ENCODE measurements at regions of chr17 and their contacts with region 1.

Region 1: DNA sequence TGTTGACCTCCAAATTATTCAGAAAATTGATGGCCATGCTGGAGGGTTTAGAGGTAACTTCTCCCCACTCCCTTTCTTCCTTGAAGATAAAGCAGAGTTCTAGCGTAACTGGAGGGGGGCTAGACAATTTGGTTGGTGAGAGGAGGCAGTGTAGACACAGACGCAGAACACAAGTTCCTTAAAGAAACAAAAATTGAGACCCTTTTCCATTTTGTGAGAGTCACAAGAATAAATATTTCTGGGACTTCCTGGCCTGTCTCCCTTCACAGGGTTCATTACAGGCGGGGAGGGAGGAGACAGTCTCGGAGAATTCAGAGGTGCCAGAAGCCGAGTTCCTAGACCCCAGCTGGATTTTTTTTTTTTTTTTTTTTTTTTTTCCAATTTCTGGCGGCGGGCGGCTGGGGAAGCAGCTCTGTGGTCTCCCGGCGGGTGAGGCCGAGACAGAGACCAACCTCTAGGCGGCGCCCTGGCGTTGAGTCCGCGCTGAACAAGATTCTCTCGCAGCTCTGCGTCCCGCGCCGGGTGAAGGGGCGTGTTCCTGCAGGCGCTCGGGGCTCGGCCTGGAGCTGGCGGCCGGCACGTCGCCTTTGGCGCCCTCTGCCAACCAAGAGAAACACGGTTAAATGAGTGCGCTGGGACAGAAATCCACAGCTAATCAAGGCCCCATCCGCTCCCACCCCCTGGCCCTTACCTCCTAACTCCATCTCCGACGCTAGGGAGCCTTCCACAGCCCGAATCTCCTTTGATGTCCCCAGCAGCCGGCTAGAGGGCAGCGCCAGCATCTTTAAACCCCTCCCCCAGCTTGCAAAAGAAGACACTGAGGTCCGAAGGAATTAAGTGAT is 10.2 kb upstream of the HOXB9 start:
- DNase-seq: peak; percentile 89
- ATAC-seq: peak; percentile 95
- H3K4me3 Mint-ChIP-seq: no peak overlapping the region
- H3K27ac Mint-ChIP-seq: no peak overlapping the region
- H3K4me1 Mint-ChIP-seq: peaks cover 6% of the 10 kb centered on the region
- H3K27me3 Mint-ChIP-seq: peaks cover 74% of the 10 kb centered on the region
- CTCF ChIP-seq: peak; percentile 77

Region 2: DNA sequence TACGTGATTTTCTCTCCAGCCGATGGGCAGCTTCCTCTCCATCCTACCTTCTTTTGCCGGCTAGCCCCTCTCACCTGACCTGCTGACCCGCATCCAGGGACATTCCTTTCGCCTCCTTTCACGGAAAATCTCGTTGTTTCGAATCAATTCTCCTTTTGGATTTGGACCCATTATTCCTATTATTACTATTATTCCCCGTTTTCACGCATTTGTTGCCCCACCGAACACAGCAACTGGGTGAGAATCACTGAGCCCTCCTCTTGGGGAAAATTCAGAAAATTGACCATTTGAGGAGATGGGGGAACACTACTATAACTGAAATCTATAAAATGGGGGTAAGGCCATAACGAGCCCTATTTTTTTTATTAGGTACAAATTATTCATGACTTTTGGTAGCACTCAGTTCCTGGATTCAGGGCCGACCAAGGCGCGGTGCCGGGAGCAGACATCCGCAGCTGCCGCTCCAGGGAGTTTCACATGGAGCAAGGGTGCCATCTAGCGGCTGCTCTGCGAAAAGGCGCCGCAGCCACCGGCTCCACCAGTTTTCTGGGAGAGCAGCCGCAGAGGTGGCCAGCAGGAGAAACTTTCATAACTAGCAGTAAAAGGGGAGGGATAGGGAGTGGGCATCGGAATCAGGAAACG is 18.0 kb before region 1 on chr17:
- CTCF ChIA-PET with region 1: interaction called, 31 read pairs
- POLR2A ChIA-PET with region 1: interaction called, 4 read pairs
- intact Hi-C with region 1: no loop called
- DNase-seq: peak; percentile 83
- ATAC-seq: peak; percentile 69
- H3K4me3 Mint-ChIP-seq: peak overlapping the region; percentile 46
- H3K27ac Mint-ChIP-seq: no peak overlapping the region
- H3K4me1 Mint-ChIP-seq: peaks cover 32% of the 10 kb centered on the region
- H3K27me3 Mint-ChIP-seq: peaks cover 86% of the 10 kb centered on the region
- CTCF ChIP-seq: peak; percentile 99

Region 3: GRCh38 chr17:48647103-48647962 is 10.9 kb after region 1 on chr17:
- CTCF ChIA-PET with region 1: interaction called, 30 read pairs
- POLR2A ChIA-PET with region 1: interaction called, 3 read pairs
- intact Hi-C with region 1: no loop called
- DNase-seq: no peak
- ATAC-seq: peak; percentile 18
- H3K4me3 Mint-ChIP-seq: peak overlapping the region; percentile 67
- H3K27ac Mint-ChIP-seq: no peak overlapping the region
- H3K4me1 Mint-ChIP-seq: peaks cover 17% of the 10 kb centered on the region
- H3K27me3 Mint-ChIP-seq: peaks cover 57% of the 10 kb centered on the region
- CTCF ChIP-seq: no peak

Region 4: GRCh38 chr17:48663134-48663924 is 26.9 kb after region 1 on chr17:
- CTCF ChIA-PET with region 1: interaction called, 11 read pairs
- POLR2A ChIA-PET with region 1: no interaction called
- intact Hi-C with region 1: no loop called
- DNase-seq: no peak
- ATAC-seq: no peak
- H3K4me3 Mint-ChIP-seq: no peak overlapping the region
- H3K27ac Mint-ChIP-seq: no peak overlapping the region
- H3K4me1 Mint-ChIP-seq: no peaks in the 10 kb centered on the region
- H3K27me3 Mint-ChIP-seq: peaks cover 14% of the 10 kb centered on the region
- CTCF ChIP-seq: no peak

Measured in activated CD8-positive, alpha-beta T cell treated with anti-CD3 and anti-CD28 coated beads for 36 hours (primary cell).